ENCODE measurements at regions of chr7 and their contacts with region 1.

Region 1: DNA sequence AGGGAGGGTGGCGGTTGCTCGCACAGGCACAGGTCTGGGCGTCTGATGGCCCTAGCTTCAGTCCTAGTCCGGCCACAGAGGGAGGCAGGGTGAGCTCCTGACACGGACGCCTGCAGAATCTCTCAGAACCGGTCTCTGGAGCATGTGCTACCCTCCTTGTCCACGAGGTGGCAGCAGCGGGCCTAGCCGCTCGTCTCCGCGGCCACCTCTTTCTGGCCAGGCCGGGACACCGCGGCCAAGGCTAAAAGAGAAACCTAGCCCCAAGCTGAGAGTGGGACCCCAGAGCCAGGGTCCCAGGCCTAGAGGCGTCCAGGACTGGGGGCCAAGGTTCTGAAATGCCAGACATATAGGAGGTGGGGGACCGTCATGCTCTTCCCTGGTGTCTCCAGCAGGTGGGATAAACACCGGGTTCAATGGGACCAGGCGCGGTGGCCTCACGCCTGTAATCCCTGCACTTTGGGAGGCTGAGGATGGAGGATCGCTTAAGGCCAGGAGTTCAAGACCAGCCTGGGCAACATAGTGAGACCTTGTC is 3.2 kb upstream of the LAT2 start:
- DNase-seq: peak; percentile 79
- H3K4me3 ChIP-seq: no peak overlapping the region
- H3K27ac ChIP-seq: no peak overlapping the region
- H3K4me1 ChIP-seq: no peaks in the 10 kb centered on the region
- H3K27me3 ChIP-seq: no peaks in the 10 kb centered on the region
- CTCF ChIP-seq: peak; percentile 96 to 99 (median 97)
- POLR2A ChIP-seq: no peak

Region 2: DNA sequence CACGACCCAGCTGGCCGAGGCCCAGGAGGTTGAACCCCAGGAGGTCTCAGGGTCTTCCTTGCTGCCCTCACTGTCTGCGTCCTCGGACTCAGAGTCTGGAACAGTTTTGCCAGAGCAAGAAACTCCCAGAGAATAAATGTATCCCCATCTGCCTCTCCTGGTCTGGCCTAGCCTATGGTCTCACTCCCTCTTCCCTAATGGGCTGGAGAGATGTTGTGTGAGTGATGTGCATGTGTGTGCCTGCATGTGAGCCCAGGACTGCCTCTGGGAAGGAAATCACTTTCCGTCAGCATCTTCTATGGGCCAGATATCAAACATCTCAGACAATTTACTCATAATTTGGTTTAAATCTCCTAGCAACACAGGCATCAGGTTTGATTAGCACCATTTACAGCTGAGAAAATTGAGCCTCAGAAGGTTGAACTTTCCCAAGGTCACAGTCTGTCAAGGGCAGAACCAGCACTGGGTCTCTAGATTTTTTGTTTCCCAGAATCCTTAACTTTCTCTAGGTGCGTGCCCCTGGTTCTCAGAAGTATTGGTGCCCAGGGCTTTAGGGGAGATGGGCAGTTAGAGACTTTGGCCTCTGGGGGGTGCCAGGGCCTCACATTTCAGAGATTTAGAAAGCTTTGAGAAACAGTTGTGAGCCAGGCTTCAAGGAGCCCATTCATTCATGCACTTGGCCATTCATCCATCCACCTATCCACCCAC is 340.8 kb before region 1 on chr7:
- intact Hi-C with region 1: loop called (anchors 10 kb)
- DNase-seq: peak; percentile 24
- H3K4me3 ChIP-seq: no peak overlapping the region
- H3K27ac ChIP-seq: no peak overlapping the region
- H3K4me1 ChIP-seq: no peaks in the 10 kb centered on the region
- H3K27me3 ChIP-seq: no peaks in the 10 kb centered on the region
- CTCF ChIP-seq: peak; percentile 43 to 72 (median 54)
- POLR2A ChIP-seq: no peak

Region 3: GRCh38 chr7:73952266-73952665 is 254.4 kb before region 1 on chr7:
- intact Hi-C with region 1: no loop called
- DNase-seq: no peak
- H3K4me3 ChIP-seq: no peak overlapping the region
- H3K27ac ChIP-seq: no peak overlapping the region
- H3K4me1 ChIP-seq: no peaks in the 10 kb centered on the region
- H3K27me3 ChIP-seq: no peaks in the 10 kb centered on the region
- CTCF ChIP-seq: no peak
- POLR2A ChIP-seq: no peak

Region 4: DNA sequence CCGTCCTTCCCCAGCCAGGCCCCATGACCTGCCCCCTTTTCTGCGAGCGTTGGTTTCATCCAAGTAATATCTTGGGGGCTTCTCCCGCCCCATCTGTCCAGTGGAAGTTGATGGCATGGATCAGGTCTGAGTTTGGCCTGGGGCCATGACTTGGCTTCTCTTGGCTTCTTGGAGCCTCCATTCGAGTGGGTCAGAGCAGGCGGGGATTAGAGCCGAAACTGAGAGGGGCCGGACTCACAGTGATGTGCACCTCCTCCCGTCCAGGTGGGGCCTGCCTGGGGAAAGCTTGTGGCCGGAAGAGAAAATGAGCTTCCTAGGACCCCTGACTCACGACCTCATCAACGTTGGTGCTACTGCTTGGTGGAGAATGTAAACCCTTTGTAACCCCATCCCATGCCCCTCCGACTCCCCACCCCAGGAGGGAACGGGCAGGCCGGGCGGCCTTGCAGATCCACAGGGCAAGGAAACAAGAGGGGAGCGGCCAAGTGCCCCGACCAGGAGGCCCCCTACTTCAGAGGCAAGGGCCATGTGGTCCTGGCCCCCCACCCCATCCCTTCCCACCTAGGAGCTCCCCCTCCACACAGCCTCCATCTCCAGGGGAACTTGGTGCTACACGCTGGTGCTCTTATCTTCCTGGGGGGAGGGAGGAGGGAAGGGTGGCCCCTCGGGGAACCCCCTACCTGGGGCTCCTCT is 138.1 kb before region 1 on chr7:
- intact Hi-C with region 1: loop called (anchors 5 kb)
- DNase-seq: no peak
- H3K4me3 ChIP-seq: no peak overlapping the region
- H3K27ac ChIP-seq: no peak overlapping the region
- H3K4me1 ChIP-seq: no peaks in the 10 kb centered on the region
- H3K27me3 ChIP-seq: no peaks in the 10 kb centered on the region
- CTCF ChIP-seq: no peak
- POLR2A ChIP-seq: no peak

Region 5: GRCh38 chr7:74401137-74401859 is 194.6 kb after region 1 on chr7:
- intact Hi-C with region 1: loop called (anchors 2 kb)
- DNase-seq: peak; percentile 65
- H3K4me3 ChIP-seq: no peak overlapping the region
- H3K27ac ChIP-seq: no peak overlapping the region
- H3K4me1 ChIP-seq: no peaks in the 10 kb centered on the region
- H3K27me3 ChIP-seq: no peaks in the 10 kb centered on the region
- CTCF ChIP-seq: peak; percentile 82 to 94 (median 90)
- POLR2A ChIP-seq: no peak

Region 6: GRCh38 chr7:74544706-74545469 is 338.2 kb after region 1 on chr7:
- intact Hi-C with region 1: no loop called
- DNase-seq: peak; percentile 22
- H3K4me3 ChIP-seq: no peak overlapping the region
- H3K27ac ChIP-seq: no peak overlapping the region
- H3K4me1 ChIP-seq: no peaks in the 10 kb centered on the region
- H3K27me3 ChIP-seq: no peaks in the 10 kb centered on the region
- CTCF ChIP-seq: peak in 3 of 4 experiments; percentile 35 to 65 (median 61)
- POLR2A ChIP-seq: no peak